Sciatic nerve (tissue), 2 donors: ENCODE measurements at regions of chr7 and their contacts with region 1.

Region 1: DNA sequence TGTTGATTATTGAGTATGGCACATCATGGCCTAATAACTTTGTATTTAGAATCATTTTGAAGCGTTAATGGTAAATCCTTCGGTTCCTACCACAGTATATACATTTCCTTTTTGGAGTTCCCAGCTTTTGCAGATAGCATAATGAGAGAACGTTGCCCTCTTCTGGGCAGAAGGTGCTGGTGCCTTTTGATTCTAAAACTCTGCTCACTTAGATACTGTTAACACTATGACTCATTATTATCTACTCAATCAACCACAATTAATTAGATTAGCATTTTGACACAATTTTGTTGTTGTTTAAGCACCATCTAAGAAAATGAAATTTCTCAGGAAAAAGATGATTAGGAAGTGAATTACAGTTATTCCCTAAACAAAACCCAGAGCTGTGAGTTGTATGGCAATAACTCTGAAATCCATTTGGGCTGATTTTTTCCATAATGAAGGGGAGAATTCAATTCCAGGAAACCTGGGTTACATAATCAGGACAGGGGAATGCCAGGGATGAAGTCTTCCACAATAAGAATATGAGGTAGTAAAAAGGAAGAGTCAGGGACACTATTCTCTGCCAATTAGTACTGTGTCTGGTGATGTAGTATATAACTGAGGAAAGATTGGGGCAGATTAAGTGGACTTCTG is 11.5 kb upstream of the DLD start:
- DNase-seq: no peak
- ATAC-seq: peak; percentile 83

Region 2: DNA sequence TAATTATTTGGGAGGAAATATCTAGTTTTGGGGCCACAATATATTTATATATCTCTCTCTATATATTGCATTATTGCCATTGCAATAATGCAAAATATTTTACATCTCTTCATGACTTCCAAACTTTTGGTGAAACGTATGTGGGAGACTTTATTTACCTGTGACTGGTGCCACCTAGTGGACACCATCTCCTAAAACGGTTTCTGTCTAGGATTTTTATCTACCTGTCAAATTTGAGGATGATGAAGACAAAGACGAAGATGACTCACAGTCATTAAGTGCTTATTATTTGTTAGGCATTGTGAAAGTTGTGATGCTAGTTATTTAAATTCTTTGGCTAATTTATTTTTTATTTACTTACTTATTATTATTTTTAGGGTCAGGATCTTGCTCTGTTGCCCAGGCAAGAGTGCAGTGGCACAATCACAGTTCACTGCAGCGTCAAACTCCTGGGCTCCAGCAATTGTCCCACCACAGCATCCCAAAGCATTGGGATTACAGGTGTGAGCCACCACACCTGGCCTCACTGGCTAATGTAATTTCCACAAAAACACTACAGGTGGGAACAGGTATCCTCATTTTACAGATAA is 154.3 kb before region 1 on chr7:
- intact Hi-C with region 1: loop called (anchors 10 kb)
- DNase-seq: peak; percentile 62
- ATAC-seq: no peak

Region 3: DNA sequence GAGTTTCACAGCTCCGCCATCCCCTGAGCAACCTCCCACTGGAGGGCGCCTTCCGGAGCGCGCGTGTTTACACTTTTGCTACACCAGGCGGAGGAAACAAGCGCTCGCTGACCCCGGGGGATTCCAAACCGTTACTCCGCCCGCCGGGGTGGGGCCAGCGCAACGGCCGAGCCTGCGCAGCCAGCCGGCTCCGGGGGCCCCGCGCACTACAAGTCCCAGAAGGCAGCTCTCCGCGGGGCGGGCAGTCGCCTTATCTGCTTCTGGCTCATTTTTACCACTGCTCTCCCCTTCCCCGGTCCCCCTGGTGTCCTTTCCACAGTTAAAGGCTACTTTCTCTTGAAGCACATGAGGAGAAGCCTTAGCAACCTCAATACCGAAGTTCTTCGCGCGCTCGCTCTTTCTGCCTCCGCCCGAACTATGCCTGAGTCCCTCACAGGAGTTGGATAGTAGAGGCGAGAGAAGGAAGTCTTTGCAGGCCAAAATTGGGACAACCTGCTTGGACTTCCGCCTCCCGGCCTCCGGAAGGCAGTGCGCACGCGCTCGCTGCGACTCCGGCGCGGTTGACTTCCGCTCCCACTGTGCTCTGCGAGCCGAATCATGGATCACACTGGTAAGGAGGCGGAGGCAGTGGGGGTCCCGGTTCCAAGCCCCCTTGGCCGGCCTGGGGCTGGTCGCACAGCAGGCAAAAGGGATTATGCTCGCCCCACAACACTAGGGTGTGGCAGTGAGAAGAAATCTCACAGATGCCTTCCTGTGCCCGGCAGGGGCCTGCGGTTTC is 135.8 kb before region 1 on chr7 and contains the start of gene CBLL1:
- intact Hi-C with region 1: loop called (anchors 5 kb)
- DNase-seq: peak; percentile 97
- ATAC-seq: peak; percentile 99
- total RNA-seq, gene CBLL1: 24.0 TPM

Region 4: DNA sequence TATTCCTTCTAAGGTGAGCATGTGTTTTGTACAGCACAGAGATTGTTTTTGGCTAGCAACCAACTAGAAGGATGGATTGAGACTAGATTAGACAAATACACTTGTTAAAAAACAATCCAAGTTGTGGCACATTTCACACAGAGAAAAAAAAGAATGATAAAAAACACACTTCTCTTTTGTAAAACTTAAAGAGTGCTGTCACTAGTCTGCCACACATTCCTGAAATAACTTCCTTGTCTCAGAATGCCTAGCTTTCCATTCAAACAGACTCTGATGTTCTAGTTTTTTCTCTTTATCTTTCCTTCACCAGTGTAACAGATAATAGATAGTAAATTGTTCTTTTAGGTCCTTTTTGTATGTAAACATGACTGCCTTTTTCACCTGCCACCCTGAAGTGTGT is 22.9 kb after region 1 on chr7:
- intact Hi-C with region 1: no loop called
- DNase-seq: no peak
- ATAC-seq: no peak

Region 5: DNA sequence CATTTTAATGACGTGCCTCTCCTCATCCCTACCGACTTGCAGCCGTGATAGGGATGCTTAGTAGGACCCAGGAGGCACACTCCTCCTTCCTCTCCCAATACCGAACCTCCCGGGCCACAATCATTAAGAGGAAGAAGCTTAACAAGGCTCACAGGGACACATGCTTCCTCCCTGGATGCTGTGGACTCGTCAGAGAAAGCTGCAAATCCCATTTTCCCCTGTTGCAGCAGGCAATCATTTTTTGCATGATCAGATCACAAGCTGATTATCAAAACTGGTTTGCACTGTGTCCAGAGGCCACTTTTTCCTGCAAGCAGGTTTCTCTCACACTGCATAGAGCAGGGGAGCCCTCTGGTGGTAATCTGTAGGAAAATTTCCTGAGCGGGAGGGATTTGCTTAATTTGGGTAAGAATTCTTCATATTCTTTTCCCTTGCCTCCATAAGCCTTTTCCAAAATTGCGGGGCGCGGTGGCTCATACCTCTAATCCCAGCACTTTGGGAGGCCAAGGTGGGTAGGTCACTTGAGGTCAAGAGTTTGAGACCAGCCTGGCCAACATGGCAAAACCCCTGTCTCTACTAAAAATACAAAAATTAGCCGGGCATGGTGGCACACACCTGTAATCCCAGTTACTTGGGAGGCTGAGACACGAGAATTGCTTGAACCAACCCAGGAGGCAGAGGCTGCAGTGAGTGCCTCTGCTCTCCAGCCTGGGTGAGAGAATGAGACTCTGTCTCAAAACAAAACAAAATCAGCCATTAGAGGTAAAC is 266.7 kb after region 1 on chr7:
- intact Hi-C with region 1: loop called (anchors 5 kb)
- DNase-seq: peak; percentile 73
- ATAC-seq: peak; percentile 90

Region 6: GRCh38 chr7:108525985-108526767 is 646.7 kb after region 1 on chr7 and contains the start of gene PNPLA8:
- intact Hi-C with region 1: no loop called
- DNase-seq: peak; percentile 100
- ATAC-seq: peak; percentile 98
- total RNA-seq, gene PNPLA8: 34.3 TPM